Common myeloid progenitor, CD34-positive (primary cell): ENCODE measurements at regions of chr17 and their contacts with region 1.

Region 1: DNA sequence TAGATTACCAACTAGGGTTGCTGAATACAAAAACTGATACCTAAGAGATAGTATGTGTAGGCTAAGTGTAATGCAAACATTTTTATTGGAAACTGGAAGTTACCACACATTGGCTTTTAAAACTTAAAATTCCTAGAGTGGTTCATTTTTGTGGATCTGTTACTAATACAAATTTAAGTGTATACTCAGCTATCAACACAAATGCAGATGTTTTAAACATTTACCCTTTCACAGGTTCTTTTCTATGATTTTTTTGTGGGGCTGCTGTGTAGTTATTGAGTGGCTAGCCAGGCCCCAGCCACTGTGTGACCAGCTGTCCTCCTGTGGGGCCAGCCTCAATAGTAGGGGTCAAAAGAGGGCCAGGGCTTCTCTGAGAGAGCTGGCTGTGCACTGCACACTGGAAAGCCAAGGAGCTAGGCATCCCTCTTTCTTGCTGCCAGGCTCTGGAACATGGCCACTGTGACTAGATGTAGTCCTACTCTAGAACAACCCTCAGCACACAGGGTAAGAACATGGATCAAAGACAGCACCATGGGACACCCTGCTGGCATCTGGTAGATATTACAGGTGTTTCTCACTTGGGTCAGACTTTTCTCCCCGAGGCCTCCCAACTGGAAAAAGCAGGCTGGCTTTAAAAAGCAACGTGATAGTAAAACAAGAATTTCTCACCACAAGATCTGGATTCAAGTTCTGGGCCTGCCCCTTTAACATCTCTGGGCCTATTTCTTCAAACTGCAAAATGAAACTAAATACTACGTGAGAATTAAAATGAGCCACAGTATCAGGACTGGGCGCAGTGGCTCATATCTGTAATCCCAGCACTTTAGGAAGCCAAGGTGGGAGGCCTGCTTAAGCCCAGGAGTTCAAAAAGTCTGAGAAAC is 7.3 kb upstream of the VEZF1 start:
- DNase-seq: peak in 2 of 3 donors; percentile 81 to 84
- H3K4me3 ChIP-seq: no peak overlapping the region
- H3K27ac ChIP-seq: no peak overlapping the region
- H3K4me1 ChIP-seq: peaks cover 11 to 35% (median 22%) of the 10 kb centered on the region in 4 experiments
- H3K27me3 ChIP-seq: no peaks in the 10 kb centered on the region

Region 2: GRCh38 chr17:57833179-57833939 is 162.0 kb before region 1 on chr17:
- CTCF ChIA-PET with region 1: interaction called, 11 read pairs
- POLR2A ChIA-PET with region 1: no interaction called
- DNase-seq: peak; percentile 70 to 79 (median 78)
- H3K4me3 ChIP-seq: peak overlapping the region; percentile 15 to 74 (median 62)
- H3K27ac ChIP-seq: no peak overlapping the region
- H3K4me1 ChIP-seq: peaks cover 5 to 14% (median 10%) of the 10 kb centered on the region in 4 experiments
- H3K27me3 ChIP-seq: no peaks in the 10 kb centered on the region

Region 3: GRCh38 chr17:57868007-57868909 is 127.1 kb before region 1 on chr17:
- CTCF ChIA-PET with region 1: interaction called, 443 read pairs
- POLR2A ChIA-PET with region 1: no interaction called
- DNase-seq: peak; percentile 94 to 99 (median 99)
- H3K4me3 ChIP-seq: peak overlapping the region in 3 of 7 experiments; percentile 8 to 39 (median 17)
- H3K27ac ChIP-seq: peak overlapping the region; percentile 64 to 79
- H3K4me1 ChIP-seq: peaks cover 6 to 75% (median 72%) of the 10 kb centered on the region in 4 experiments
- H3K27me3 ChIP-seq: no peaks in the 10 kb centered on the region

Region 4: DNA sequence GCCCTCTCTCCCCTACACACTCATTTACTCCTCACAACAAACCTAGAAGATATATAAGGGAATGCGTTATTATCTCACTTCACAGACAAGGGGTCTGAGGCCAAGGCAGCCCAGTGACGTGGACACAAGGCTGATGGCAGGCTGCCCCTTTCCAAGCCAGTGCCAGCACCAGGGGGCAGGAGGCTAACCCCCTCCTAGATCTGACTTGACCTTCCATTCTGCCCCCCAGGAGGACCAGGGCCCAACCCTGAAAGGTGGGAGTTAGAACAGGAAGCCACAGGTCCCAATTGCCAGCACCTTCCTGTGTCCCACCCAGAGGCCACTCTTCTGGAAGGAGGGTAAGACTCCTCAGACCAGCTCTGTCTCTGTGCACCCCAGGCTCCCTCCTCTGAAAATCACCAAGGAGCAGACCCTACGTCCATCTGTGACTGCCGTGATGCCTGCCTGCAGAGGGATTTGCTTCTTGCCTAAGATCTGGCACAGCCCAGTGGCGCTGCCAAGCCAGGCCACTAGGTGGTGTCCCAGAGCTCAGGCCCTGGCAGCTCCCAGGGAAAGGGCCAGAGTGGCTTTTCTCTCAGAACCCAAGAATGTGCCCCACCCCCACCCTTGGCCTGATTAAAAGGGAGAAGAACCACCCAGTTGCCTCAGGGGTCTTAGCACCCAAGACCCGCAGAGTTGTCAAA is 103.0 kb before region 1 on chr17:
- CTCF ChIA-PET with region 1: interaction called, 11 read pairs
- POLR2A ChIA-PET with region 1: interaction called, 5 read pairs
- DNase-seq: peak; percentile 72 to 83 (median 77)
- H3K4me3 ChIP-seq: peak overlapping the region in 2 of 7 experiments; percentile 31 to 52
- H3K27ac ChIP-seq: peak overlapping the region in 1 of 2 experiments; percentile 69
- H3K4me1 ChIP-seq: peaks cover 0 to 54% (median 43%) of the 10 kb centered on the region in 4 experiments
- H3K27me3 ChIP-seq: no peaks in the 10 kb centered on the region

Region 5: GRCh38 chr17:58006924-58007780 is 11.8 kb after region 1 on chr17 and contains the start of gene SRSF1:
- CTCF ChIA-PET with region 1: interaction called, 17 read pairs
- POLR2A ChIA-PET with region 1: interaction called, 7 read pairs
- DNase-seq: peak; percentile 98 to 99 (median 98)
- H3K4me3 ChIP-seq: peak within 1 kb of the TSS; percentile 73 to 100 (median 99)
- H3K27ac ChIP-seq: peak within 1 kb of the TSS; percentile 93 to 98
- H3K4me1 ChIP-seq: peaks cover 18 to 45% (median 35%) of the 10 kb centered on the region in 4 experiments
- H3K27me3 ChIP-seq: no peaks in the 10 kb centered on the region